Activated T-helper 1 cell treated with anti-CD3 and anti-CD28 coated beads, Interleukin-12 subunit alpha, Interleukin-12 subunit beta, Interleukin-2, Interleukin-4 antibody, amounts not matched to agents 30 ng/mL and 10 ng/mL and 1 ng/mL, durations not matched to agents 14 hours and 24 hours and 36 hours (primary cell): ENCODE measurements at regions of chrX and their contacts with region 1.

Region 1: GRCh38 chrX:71671043-71671780 is 3.9 kb downstream of the LOC101059915 start:
- DNase-seq: no peak
- H3K4me3 Mint-ChIP-seq: no peak overlapping the region
- H3K27ac Mint-ChIP-seq: peak overlapping the region; percentile 15
- H3K4me1 Mint-ChIP-seq: peaks cover 18% of the 10 kb centered on the region
- H3K27me3 Mint-ChIP-seq: peaks cover 5% of the 10 kb centered on the region

Region 2: GRCh38 chrX:71859637-71860036 is 188.4 kb after region 1 on chrX:
- intact Hi-C with region 1: loop called (anchors 1 kb)
- DNase-seq: no peak
- H3K4me3 Mint-ChIP-seq: no peak overlapping the region
- H3K27ac Mint-ChIP-seq: no peak overlapping the region
- H3K4me1 Mint-ChIP-seq: no peaks in the 10 kb centered on the region
- H3K27me3 Mint-ChIP-seq: peaks cover 3% of the 10 kb centered on the region